ENCODE measurements at regions of chr3 and their contacts with region 1.

Region 1: GRCh38 chr3:115692887-115693524 is 69.7 kb downstream of the GAP43 start:
- DNase-seq: peak; percentile 67
- ATAC-seq: peak; percentile 99
- H3K4me3 ChIP-seq: no peak overlapping the region
- H3K27ac ChIP-seq: no peak overlapping the region
- H3K4me1 ChIP-seq: no peaks in the 10 kb centered on the region
- H3K27me3 ChIP-seq: no peaks in the 10 kb centered on the region
- CTCF ChIP-seq: peak; percentile 93
- EP300 ChIP-seq: no peak
- POLR2A ChIP-seq: no peak
- RAD21 ChIP-seq: peak; percentile 85

Region 2: DNA sequence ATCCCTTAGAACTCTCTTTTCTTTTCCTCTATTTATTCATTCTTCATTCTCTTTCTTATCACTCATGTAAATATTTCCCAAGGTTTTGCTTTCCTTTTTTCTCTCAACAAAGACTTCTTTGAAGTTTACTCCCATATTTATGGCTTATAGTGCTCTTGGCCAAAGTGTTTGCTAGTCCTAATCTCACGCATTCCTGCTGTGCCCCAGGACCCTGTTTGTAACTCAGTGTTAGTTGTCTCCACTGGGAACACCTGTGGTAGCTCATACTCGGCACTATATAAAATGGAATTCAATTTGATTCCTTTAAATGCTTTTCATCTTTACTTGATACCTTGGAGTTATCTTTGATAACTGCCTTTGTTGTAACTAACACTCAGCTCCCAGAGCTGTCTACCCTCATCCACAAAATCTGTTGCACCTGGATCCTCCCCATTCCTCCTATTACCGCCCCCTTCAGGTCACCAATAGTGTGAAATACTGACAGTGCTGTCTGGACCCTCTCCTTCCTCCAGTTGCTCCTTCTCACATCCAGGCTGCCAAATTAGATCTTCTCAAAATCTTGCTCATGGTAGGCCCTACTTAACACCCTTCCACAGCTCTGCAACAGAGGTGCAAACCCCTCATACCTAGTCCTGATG is 1322.3 kb before region 1 on chr3:
- CTCF ChIA-PET with region 1: no interaction called
- POLR2A ChIA-PET with region 1: no interaction called
- in situ Hi-C with region 1: no loop called
- intact Hi-C with region 1: loop called (anchors 10 kb)
- DNase-seq: peak; percentile 10
- ATAC-seq: peak; percentile 45; the same call in 2 of the 3 replicates
- H3K4me3 ChIP-seq: no peak overlapping the region
- H3K27ac ChIP-seq: no peak overlapping the region
- H3K4me1 ChIP-seq: peaks cover 13% of the 10 kb centered on the region
- H3K27me3 ChIP-seq: no peaks in the 10 kb centered on the region
- CTCF ChIP-seq: no peak
- EP300 ChIP-seq: no peak
- POLR2A ChIP-seq: no peak
- RAD21 ChIP-seq: no peak

Region 3: DNA sequence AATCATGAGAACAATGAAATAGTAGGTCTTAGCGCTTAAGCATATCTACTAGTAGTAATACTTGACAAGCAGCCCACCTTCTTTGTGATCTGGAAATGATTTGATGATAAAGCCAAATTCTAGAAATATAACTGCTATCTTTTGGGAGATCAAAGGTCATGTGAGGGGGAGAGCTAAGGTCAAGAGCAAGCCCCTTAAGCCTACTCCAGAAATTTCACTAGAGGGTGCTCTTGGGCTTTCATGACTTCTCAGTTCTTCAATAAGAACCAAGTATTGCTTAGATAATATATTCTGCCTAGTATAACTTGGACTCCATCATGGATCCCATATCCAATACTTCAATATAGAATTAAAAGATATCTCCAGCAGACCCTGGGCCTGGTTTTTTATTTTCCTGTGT is 865.5 kb before region 1 on chr3:
- CTCF ChIA-PET with region 1: no interaction called
- POLR2A ChIA-PET with region 1: no interaction called
- in situ Hi-C with region 1: no loop called
- intact Hi-C with region 1: loop called (anchors 1 kb)
- DNase-seq: peak; percentile 66
- ATAC-seq: peak; percentile 89
- H3K4me3 ChIP-seq: no peak overlapping the region
- H3K27ac ChIP-seq: no peak overlapping the region
- H3K4me1 ChIP-seq: no peaks in the 10 kb centered on the region
- H3K27me3 ChIP-seq: no peaks in the 10 kb centered on the region
- CTCF ChIP-seq: peak; percentile 68
- EP300 ChIP-seq: no peak
- POLR2A ChIP-seq: no peak
- RAD21 ChIP-seq: peak; percentile 62

Region 4: DNA sequence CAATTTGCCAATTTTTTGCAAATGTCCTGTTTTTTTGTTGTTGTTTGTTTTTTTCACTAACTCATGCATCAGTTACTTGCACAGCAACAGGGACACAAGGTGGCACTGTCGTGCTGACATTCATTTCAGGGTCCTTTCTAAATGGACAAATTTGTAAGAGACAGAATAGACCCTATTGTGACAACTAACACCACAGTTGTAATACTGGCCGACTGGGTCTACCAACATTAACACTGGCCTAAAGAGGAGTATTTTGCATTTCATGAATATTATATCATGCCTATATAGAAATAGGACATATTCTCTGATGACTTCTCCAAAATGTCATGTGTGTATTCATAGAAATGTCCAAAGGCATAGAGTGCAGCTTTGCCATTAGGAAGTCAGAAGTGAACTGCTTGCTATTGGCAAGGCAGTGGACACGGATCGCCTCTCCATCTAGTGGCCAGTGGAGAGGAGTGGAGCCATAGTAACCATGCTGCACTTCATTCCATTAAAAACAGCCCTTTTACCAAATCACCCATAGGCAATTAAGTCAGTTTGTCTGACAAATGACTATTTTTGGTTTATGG is 600.7 kb before region 1 on chr3:
- CTCF ChIA-PET with region 1: interaction called, 6 read pairs
- POLR2A ChIA-PET with region 1: no interaction called
- in situ Hi-C with region 1: loop called (anchors 25 kb)
- intact Hi-C with region 1: loop called (anchors 1 kb)
- DNase-seq: peak; percentile 34
- ATAC-seq: peak; percentile 100
- H3K4me3 ChIP-seq: no peak overlapping the region
- H3K27ac ChIP-seq: no peak overlapping the region
- H3K4me1 ChIP-seq: no peaks in the 10 kb centered on the region
- H3K27me3 ChIP-seq: no peaks in the 10 kb centered on the region
- CTCF ChIP-seq: peak; percentile 65
- EP300 ChIP-seq: no peak
- POLR2A ChIP-seq: no peak
- RAD21 ChIP-seq: no peak

Region 5: GRCh38 chr3:115783938-115784738 is 91.1 kb after region 1 on chr3:
- CTCF ChIA-PET with region 1: interaction called, 4 read pairs
- POLR2A ChIA-PET with region 1: no interaction called
- in situ Hi-C with region 1: no loop called
- intact Hi-C with region 1: loop called (anchors 1 kb)
- DNase-seq: peak; percentile 87
- ATAC-seq: peak; percentile 96
- H3K4me3 ChIP-seq: peak overlapping the region; percentile 55 to 77 (median 70)
- H3K27ac ChIP-seq: peak overlapping the region; percentile 80
- H3K4me1 ChIP-seq: peaks cover 48% of the 10 kb centered on the region
- H3K27me3 ChIP-seq: no peaks in the 10 kb centered on the region
- CTCF ChIP-seq: peak; percentile 91
- EP300 ChIP-seq: peak in 1 of 2 experiments; percentile 61; a peak in 1 of 4 replicates
- POLR2A ChIP-seq: peak; percentile 14 to 64; a peak in 2 of 4 replicates
- RAD21 ChIP-seq: peak; percentile 91

Region 6: DNA sequence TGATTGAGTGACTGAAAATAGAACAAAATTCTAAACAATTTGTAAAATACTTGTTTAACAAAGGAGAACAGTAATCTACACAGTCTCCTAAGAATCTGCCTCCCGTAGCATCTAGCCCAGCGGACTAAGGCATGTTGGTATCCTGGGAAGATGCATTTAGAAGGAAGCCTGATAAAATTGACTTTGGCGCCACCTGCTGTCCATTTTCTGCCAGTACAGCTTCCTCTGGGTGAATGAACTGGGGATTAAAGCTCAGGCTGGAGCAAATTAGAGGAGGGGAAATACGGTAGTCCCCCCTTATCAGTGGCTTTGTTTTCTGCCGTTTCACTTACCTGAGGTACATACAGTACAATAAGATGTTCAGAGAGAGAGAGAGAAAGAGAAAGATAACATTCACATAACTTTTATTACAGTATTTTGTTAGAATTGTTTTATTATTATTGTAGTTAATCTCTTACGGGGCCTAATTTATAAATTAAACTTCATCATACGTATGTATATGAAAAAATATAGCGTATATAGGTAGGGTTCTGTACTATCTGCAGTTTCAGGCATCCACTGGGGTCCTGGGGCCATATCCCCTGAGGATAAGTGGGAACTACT is 121.9 kb after region 1 on chr3:
- CTCF ChIA-PET with region 1: interaction called, 10 read pairs
- POLR2A ChIA-PET with region 1: no interaction called
- in situ Hi-C with region 1: loop called (anchors 5 kb)
- intact Hi-C with region 1: loop called (anchors 1 kb)
- DNase-seq: peak; percentile 70
- ATAC-seq: peak; percentile 92
- H3K4me3 ChIP-seq: peak overlapping the region in 1 of 3 experiments; percentile 6; a peak in 1 of 6 replicates
- H3K27ac ChIP-seq: no peak overlapping the region
- H3K4me1 ChIP-seq: peaks cover 24% of the 10 kb centered on the region
- H3K27me3 ChIP-seq: no peaks in the 10 kb centered on the region
- CTCF ChIP-seq: peak; percentile 89
- EP300 ChIP-seq: no peak
- POLR2A ChIP-seq: no peak
- RAD21 ChIP-seq: peak; percentile 73

Region 7: GRCh38 chr3:115819785-115820384 is 126.9 kb after region 1 on chr3:
- CTCF ChIA-PET with region 1: interaction called, 10 read pairs
- POLR2A ChIA-PET with region 1: no interaction called
- in situ Hi-C with region 1: loop called (anchors 5 kb)
- intact Hi-C with region 1: no loop called
- DNase-seq: peak; percentile 81
- ATAC-seq: peak; percentile 68
- H3K4me3 ChIP-seq: no peak overlapping the region
- H3K27ac ChIP-seq: no peak overlapping the region
- H3K4me1 ChIP-seq: peaks cover 49% of the 10 kb centered on the region
- H3K27me3 ChIP-seq: no peaks in the 10 kb centered on the region
- CTCF ChIP-seq: peak; percentile 95
- EP300 ChIP-seq: 0 out of 4 replicates have a peak, but pooled peaks of 1 of the 2 experiments have one; percentile 19
- POLR2A ChIP-seq: no peak
- RAD21 ChIP-seq: peak; percentile 77